Psoas muscle (tissue), 8 donors: ENCODE measurements at regions of chr17 and their contacts with region 1.

Region 1: DNA sequence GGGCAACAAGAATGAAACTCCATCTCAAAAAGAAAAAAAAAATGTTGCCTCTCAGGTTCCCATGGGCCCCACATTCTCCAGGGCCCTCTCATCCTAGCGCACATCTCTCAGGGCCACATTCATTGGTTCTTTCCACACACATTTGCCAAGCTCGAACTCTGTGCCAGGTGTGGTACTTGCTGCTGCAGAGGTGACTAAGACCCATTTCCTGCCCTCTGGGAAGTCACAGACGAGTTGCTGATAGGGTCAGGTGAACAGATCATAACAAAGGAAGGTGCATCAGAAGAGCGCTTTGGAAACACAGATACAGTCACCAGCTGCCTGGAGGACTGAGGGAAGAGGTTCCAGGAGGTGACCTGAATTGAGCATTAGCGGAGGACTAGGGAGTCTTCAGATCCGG is 1.0 kb downstream of the GSDMA start:
- DNase-seq: no peak
- ATAC-seq: no peak
- H3K4me3 ChIP-seq: no peak overlapping the region
- H3K27ac ChIP-seq: no peak overlapping the region
- H3K4me1 ChIP-seq: no peaks in the 10 kb centered on the region
- H3K27me3 ChIP-seq: no peaks in the 10 kb centered on the region
- CTCF ChIP-seq: no peak

Region 2: GRCh38 chr17:39904990-39905288 is 58.9 kb before region 1 on chr17:
- intact Hi-C with region 1: no loop called
- DNase-seq: no peak
- ATAC-seq: no peak
- H3K4me3 ChIP-seq: no peak overlapping the region
- H3K27ac ChIP-seq: no peak overlapping the region
- H3K4me1 ChIP-seq: no peaks in the 10 kb centered on the region
- H3K27me3 ChIP-seq: no peaks in the 10 kb centered on the region
- CTCF ChIP-seq: no peak

Region 3: DNA sequence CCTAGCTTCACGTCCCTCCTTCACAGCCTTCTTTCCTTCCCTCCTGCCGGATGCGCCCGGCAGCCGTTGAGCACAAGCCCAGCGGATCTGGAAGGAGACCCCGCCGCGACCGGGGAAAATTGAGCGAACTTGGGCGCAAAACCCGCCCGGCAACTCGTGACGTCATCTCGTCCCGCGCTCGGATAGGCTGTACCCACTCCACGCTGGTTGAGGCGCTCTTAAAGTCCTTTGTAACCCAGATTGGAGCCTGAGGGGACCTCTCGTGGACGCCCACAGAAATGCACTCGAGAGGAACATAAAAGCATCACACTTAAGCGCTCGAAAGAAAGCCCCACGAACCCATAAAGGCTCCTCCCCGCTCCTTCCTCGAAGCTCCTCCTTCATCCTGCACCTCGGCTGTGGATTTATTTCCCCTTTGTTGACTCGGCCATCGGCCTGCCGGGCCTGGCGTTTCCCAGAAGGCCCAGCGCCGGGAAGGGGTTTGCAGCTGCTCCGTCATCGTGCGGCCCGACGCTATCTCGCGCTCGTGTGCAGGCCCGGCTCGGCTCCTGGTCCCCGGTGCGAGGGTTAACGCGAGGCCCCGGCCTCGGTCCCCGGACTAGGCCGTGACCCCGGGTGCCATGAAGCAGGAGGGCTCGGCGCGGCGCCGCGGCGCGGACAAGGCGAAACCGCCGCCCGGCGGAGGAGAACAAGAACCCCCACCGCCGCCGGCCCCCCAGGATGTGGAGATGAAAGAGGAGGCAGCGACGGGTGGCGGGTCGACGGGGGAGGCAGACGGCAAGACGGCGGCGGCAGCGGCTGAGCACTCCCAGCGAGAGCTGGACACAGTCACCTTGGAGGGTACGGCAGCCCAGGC is 16.8 kb after region 1 on chr17 and contains the start of gene PSMD3:
- intact Hi-C with region 1: loop called (anchors 1 to 2 kb)
- DNase-seq: peak; percentile 98
- ATAC-seq: peak; percentile 93 to 95 (median 94)
- H3K4me3 ChIP-seq: peak within 1 kb of the TSS; percentile 77
- H3K27ac ChIP-seq: peak within 1 kb of the TSS; percentile 90
- H3K4me1 ChIP-seq: peaks cover 17% of the 10 kb centered on the region
- H3K27me3 ChIP-seq: peaks cover 0 to 3% (median 2%) of the 10 kb centered on the region in 3 donors
- CTCF ChIP-seq: peak; percentile 74
- total RNA-seq, gene PSMD3: 137 to 253 (median 220) TPM

Region 4: GRCh38 chr17:40015005-40015997 is 51.5 kb after region 1 on chr17 and contains the start of gene CSF3:
- intact Hi-C with region 1: no loop called
- DNase-seq: peak; percentile 78 to 95
- ATAC-seq: peak; percentile 52 to 62 (median 58)
- H3K4me3 ChIP-seq: peak within 1 kb of the TSS; percentile 52
- H3K27ac ChIP-seq: peak within 1 kb of the TSS; percentile 87
- H3K4me1 ChIP-seq: peaks cover 62% of the 10 kb centered on the region
- H3K27me3 ChIP-seq: no peaks in the 10 kb centered on the region
- CTCF ChIP-seq: no peak
- total RNA-seq, gene CSF3: 0.30 to 39.8 (median 19.4) TPM